ENCODE measurements at regions of chr13 and their contacts with region 1.

Region 1: DNA sequence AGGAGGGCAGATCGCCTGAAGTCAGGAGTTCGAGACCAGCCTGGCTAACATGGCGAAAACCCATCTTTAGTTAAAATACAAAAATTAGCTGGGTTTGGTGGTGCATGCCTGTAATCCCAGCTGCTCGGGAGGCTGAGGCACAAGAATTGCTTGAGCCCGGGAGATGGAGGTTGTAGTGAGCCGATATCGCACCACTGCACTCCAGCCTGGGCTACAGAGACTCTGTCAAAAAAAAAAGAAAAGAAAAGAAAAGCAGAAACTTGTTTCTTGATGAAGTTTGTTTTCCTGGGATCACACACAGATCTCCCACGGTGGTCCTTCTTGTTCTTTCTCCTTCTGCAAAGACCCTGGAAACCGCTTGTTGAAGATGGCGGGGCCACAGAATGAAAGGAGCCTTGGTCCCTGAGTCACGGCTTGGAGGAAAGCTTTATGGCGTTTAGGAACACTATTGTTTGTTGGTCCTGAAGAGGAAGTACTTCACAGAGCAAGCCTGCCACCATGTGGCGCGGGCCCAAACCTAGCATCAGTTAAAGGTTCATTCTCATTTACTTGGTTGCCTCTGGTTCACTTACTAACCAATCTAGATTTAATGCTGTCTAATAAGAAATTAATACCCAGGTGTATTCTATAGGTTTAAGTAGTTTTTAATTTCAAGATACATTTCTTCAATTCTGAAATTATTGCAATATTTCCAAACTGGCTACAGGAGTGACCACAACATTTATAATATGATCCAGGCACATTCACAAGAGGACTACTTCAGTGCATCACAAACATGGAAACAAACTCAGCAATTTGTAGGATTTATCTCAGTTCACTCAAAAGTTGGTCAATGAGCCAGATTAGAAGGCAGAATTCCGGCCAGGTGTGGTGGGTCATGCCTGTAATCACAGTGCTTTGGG is 21.3 kb upstream of the ARL11 start:
- DNase-seq: peak; percentile 93
- H3K4me3 ChIP-seq: peak overlapping the region in 3 of 4 donors; percentile 22 to 39 (median 35)
- H3K27ac ChIP-seq: peak overlapping the region in 1 of 4 donors; percentile 32
- H3K4me1 ChIP-seq: no peaks in the 10 kb centered on the region
- H3K27me3 ChIP-seq: no peaks in the 10 kb centered on the region
- CTCF ChIP-seq: peak; percentile 14 to 73 (median 57)
- EP300 ChIP-seq: no peak
- POLR2A ChIP-seq: no peak

Region 2: GRCh38 chr13:49300739-49301589 is 306.0 kb before region 1 on chr13:
- intact Hi-C with region 1: loop called (anchors 5 kb)
- DNase-seq: peak; percentile 81
- H3K4me3 ChIP-seq: peak overlapping the region in 3 of 4 donors; percentile 9 to 34 (median 22)
- H3K27ac ChIP-seq: peak overlapping the region; percentile 43 to 89 (median 76)
- H3K4me1 ChIP-seq: peaks cover 0 to 42% (median 38%) of the 10 kb centered on the region in 4 donors
- H3K27me3 ChIP-seq: no peaks in the 10 kb centered on the region
- CTCF ChIP-seq: peak; percentile 82 to 95 (median 90)
- EP300 ChIP-seq: no peak
- POLR2A ChIP-seq: no peak

Region 3: GRCh38 chr13:49669735-49670309 is 62.8 kb after region 1 on chr13:
- intact Hi-C with region 1: no loop called
- DNase-seq: peak; percentile 73
- H3K4me3 ChIP-seq: no peak overlapping the region
- H3K27ac ChIP-seq: no peak overlapping the region
- H3K4me1 ChIP-seq: peaks cover 0 to 6% (median 0%) of the 10 kb centered on the region in 4 donors
- H3K27me3 ChIP-seq: no peaks in the 10 kb centered on the region
- CTCF ChIP-seq: peak; percentile 38 to 64 (median 50)
- EP300 ChIP-seq: no peak
- POLR2A ChIP-seq: no peak

Region 4: DNA sequence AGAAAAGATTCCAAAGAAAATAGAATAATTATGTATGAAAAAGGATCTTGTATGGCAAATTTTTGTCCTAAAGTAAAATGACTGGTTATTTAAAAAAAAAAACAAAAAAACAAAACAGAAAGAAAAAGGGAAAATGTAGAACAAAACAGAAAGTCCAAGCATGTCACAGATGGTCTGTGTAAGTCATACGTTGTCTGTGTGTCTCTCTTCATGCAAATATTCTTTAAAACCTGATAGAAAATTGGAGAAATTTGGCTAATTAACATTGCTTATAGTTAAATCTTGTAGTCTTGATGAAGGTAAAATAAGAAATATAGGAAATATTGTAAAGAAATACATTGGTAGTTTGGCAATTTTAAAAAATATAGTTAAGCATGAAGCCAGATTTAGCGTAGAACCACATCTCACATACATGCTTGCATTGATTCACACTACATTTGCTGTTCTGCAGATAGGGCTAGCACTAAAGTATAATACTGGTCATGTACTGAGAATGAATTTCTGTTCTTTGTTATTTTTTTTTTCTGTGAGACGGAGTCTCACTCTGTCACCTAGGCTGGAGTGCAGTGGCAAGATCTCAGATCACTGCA is 270.7 kb after region 1 on chr13:
- intact Hi-C with region 1: no loop called
- DNase-seq: no peak
- H3K4me3 ChIP-seq: no peak overlapping the region
- H3K27ac ChIP-seq: no peak overlapping the region
- H3K4me1 ChIP-seq: no peaks in the 10 kb centered on the region
- H3K27me3 ChIP-seq: no peaks in the 10 kb centered on the region
- CTCF ChIP-seq: no peak
- EP300 ChIP-seq: no peak
- POLR2A ChIP-seq: no peak